Head of caudate nucleus (tissue), 42 donors: ENCODE measurements at regions of chr6 and their contacts with region 1.

Region 1: DNA sequence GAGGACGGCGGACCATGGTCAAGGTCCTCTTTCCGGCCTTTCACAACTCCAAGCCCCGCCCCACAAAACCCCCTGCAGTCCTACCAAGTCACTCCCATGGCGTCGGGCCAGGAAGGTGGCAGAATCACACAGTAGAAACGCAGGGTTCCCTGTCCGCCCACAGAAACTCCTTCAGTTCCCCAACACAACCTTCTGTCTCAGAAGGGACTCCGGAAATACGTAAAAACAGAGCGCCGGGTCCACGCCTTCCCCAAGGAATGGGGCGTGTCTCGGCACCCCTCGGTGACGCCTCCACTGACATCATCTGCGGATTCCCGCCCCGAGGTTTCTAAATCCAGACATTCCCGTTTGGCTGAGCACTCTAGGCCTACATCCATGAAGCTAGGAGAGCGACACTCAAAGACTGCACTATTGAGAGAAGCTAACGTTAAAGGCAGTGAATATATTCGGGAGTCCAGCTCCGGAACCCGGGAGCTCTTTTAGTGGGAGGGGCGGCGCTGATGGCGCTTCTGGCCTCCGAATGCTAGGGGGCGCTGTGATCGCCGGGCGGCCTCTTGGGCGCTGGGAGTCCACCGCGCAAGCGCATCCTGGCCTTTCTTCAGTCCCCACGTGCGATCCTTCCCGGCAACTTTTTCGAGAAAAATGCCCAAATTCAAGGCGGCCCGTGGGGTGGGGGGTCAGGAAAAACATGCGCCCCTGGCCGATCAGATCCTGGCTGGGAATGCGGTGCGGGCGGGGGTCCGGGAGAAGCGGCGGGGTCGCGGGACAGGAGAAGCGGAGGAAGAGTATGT is at the starts of genes BYSL and MED20:
- DNase-seq: peak; percentile 92 to 99 (median 96)

Region 2: DNA sequence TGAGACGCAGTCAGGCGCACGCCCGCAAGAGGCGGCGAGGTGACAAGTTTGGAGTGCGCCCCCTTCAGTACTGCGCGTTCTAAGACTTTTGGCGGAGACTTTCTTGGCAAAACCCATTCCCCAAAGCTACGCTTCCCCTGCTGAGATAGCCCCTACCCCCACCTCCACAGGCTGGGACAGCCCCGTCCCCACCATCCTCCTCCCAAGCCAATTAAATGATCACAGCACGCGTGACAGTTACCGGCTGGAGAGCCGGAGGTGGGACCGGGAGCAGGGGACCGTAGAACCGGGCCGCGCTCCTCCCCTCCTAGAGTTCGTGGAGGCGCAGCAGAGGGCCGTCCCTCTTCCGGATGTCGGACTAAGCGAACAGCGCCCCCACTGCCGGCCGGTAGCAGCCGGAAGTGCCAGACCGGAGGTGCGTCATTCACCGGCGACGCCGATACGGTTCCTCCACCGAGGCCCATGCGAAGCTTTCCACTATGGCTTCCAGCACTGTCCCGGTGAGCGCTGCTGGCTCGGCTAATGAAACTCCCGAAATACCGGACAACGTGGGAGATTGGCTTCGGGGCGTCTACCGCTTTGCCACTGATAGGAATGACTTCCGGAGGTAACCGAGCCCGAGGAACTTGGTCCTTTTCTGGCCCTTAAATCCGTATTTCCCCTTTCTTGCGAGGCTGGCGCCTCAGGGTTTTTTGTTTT is 133.7 kb before region 1 on chr6 and contains the start of gene TOMM6:
- intact Hi-C with region 1: loop called (anchors 1 kb)
- DNase-seq: peak; percentile 85 to 99 (median 96)

Region 3: DNA sequence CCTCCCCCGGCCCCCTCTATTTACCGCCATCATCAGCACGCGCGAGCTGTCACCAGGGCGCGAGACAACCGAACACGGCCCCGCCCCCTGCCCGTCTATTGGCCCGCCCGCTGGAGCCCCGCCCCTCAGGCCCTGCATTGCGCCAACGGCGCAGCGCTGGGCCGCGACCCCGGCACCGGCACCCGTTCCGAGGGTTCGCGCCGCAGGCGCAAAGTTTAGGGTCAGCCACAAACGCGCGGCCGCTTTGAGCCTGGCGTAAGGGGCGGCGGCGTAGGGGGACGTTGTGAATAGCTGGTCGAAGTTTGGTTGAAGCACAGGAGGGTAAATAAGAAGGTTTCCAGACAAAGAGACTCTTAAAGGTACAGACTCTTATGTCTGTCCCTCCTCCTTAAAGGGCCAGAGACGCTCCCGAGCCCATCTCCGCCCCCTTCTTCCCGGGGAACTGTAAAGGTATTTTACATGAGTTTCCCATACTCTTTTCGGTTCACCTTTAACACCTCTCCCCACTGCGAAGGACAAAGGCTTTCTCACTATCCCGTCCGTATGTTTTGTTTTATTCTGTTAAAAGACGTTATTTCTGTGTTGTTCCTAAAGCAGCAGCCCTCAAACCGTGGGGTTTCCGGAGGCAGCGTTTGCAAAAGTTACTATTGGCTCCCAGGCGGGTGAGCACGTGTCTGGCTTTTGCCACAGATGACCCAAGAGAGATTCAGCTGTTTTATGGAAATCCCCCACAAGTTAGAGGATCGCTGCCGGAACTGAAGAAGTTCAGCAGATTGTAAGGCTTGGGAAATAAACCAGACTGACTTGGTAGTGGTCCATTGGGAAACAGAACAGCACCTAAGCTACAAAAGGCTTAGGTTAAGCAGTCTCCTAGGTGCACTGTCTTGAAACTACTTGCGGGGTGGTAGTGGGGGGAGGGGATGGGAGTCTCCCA is 25.5 kb before region 1 on chr6 and contains the start of gene USP49:
- intact Hi-C with region 1: loop called (anchors 2 kb)
- DNase-seq: peak; percentile 78 to 95 (median 91)

Region 4: GRCh38 chr6:41970436-41970846 is 49.3 kb after region 1 on chr6:
- intact Hi-C with region 1: no loop called
- DNase-seq: peak in 8 of 42 donors; percentile 3 to 45 (median 16)

Region 5: DNA sequence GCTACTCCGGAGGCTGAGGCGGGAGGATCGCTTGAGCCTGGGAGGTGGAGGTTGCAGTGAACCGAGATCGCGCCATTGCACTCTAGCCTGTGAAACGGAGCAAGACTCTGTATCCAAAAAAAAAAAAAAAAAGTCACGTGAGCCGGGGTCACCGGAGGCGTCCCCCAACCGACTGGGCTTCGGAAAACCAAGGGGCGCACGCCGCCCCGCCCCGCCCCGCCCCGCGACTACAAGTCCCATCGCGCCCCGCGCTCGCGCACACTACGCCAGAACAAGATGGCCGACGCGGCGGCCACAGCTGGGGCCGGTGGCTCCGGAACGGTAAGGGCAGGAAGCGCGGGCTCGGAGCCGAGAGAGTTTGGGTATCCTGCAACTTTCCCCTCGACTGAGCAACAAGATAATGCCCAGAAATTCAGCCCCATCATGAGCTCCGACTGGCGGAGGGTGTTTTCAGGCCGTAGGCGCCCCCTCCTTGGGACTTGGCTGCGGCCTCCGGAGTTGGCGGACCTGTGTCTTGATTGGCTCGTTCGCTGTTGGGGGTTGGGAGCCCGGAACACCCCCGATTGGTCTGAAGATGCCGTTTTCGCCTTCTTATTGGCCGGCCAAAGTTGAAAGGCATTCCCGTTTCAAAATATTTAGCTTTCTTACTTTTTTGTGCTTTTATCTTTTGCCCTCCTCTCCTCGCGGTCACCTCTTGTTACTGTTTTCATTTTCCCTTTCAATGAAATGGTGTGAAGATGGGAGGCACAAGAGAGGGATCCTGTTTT is 129.3 kb after region 1 on chr6 and contains the start of gene TAF8:
- intact Hi-C with region 1: loop called (anchors 2 kb)
- DNase-seq: peak; percentile 88 to 97 (median 93)

Region 6: GRCh38 chr6:42217519-42218367 is 296.6 kb after region 1 on chr6 and contains the start of gene MRPS10:
- intact Hi-C with region 1: loop called (anchors 5 kb)
- DNase-seq: peak; percentile 89 to 98 (median 95)